ENCODE measurements at regions of chr7 and their contacts with region 1.

Region 1: DNA sequence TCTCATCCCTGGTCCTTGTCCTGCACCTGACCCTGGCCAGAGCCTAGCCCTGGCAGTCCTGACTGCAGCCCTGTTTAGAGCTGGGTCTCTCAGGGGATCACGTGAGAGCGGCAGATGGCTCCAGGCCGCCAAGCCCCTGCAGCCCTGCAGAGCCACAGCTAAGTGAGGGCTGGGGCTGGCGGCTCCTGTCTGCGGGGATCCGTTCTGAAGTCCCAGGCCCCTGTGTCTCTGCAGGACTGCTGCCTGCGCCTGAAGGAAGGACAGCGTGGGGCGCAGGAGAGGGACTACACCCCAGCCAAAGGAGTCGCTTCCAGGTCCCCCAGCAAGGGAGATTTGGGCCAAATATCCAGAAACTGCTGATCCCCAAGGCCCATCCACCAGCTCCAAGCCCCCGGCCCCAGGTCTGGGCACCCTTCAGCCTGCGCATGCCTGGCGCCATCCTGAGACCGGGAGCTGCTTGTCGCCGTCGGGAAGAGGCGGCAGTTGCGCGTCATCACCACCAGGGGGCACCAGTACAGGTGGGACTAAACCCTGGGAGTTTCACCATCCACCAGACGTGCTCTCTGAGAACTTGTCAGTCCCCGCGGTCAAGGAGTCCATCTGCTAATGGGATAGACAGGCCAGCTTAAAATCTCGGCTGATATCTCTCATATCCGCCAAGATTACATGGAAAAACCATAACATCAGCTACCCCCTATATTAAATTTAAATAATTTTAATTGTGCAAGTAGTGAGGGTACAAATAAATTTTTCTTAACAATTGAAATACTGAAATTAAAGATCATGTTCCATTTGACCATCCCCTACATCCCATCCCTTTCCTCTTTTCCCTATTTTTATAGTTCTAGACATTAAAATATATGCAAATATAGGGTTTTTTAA is 25.1 kb upstream of the GHRHR start:
- H3K4me3 ChIP-seq: no peak overlapping the region
- H3K27ac ChIP-seq: no peak overlapping the region
- H3K4me1 ChIP-seq: no peaks in the 10 kb centered on the region
- CTCF ChIP-seq: peak; percentile 67

Region 2: GRCh38 chr7:30771880-30772425 is 166.7 kb before region 1 on chr7:
- CTCF ChIA-PET with region 1: interaction called, 10 read pairs
- POLR2A ChIA-PET with region 1: no interaction called
- H3K4me3 ChIP-seq: peak overlapping the region; percentile 67
- H3K27ac ChIP-seq: peak overlapping the region; percentile 56; the same call in 1 of the 2 replicates
- H3K4me1 ChIP-seq: 0 out of 2 replicates have a peak, but pooled peaks cover 2% of the 10 kb centered on the region
- CTCF ChIP-seq: no peak

Region 3: DNA sequence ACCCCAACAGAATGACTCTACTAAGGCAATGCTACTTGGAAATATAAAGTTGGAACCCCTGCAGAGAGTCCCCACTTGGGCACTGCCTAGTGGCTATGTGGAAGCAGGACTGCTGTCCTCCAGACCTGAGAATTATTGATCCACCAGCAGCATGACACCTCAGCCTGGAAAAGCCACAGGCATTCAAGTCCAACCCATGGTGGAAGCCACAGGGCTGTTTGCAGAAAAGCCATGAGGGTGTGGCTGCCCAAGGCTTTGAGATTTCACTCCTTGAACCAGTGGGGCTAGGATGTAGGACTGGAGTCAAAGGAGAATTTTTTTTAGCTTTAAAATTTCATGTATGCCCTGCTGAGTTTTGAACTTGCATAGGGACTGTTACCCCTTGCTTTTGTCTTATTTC is 11.5 kb after region 1 on chr7:
- CTCF ChIA-PET with region 1: interaction called, 10 read pairs
- POLR2A ChIA-PET with region 1: no interaction called
- H3K4me3 ChIP-seq: no peak overlapping the region
- H3K27ac ChIP-seq: no peak overlapping the region
- H3K4me1 ChIP-seq: no peaks in the 10 kb centered on the region
- CTCF ChIP-seq: no peak

Region 4: DNA sequence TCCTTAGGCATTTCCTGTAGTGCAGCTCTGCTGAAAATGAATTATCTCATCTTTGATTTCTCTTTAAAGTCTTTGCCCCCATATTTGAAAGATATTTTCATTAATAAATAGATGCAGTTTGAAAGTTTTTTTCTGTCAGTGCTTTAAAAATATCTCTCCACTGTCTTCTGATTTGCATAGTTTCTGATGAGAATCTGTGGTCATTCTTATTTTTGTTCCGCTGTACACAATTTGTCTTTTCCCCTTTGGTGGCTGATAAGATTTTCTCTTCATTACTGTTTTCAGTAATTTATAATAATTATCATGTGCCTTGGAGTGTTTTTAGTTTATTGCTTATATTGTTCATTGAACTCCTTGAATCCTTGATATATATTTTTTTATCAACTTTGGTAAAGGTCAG is 18.0 kb after region 1 on chr7:
- CTCF ChIA-PET with region 1: interaction called, 33 read pairs
- POLR2A ChIA-PET with region 1: no interaction called
- H3K4me3 ChIP-seq: no peak overlapping the region
- H3K27ac ChIP-seq: no peak overlapping the region
- H3K4me1 ChIP-seq: no peaks in the 10 kb centered on the region
- CTCF ChIP-seq: no peak

Region 5: GRCh38 chr7:30974605-30975255 is 36.1 kb after region 1 on chr7:
- CTCF ChIA-PET with region 1: interaction called, 20 read pairs
- POLR2A ChIA-PET with region 1: no interaction called
- H3K4me3 ChIP-seq: no peak overlapping the region
- H3K27ac ChIP-seq: no peak overlapping the region
- H3K4me1 ChIP-seq: no peaks in the 10 kb centered on the region
- CTCF ChIP-seq: no peak

Region 6: GRCh38 chr7:30983042-30983913 is 44.6 kb after region 1 on chr7:
- CTCF ChIA-PET with region 1: interaction called, 14 read pairs
- POLR2A ChIA-PET with region 1: no interaction called
- H3K4me3 ChIP-seq: no peak overlapping the region
- H3K27ac ChIP-seq: no peak overlapping the region
- H3K4me1 ChIP-seq: no peaks in the 10 kb centered on the region
- CTCF ChIP-seq: peak; percentile 85